ENCODE measurements at regions of chr12 and their contacts with region 1.

Region 1: GRCh38 chr12:79763766-79764452 is 73.1 kb upstream of the PAWR start:
- DNase-seq: no peak
- ATAC-seq: no peak
- H3K4me3 ChIP-seq: no peak overlapping the region
- H3K27ac ChIP-seq: no peak overlapping the region
- H3K4me1 ChIP-seq: no peaks in the 10 kb centered on the region
- H3K27me3 ChIP-seq: no peaks in the 10 kb centered on the region
- CTCF ChIP-seq: no peak

Region 2: DNA sequence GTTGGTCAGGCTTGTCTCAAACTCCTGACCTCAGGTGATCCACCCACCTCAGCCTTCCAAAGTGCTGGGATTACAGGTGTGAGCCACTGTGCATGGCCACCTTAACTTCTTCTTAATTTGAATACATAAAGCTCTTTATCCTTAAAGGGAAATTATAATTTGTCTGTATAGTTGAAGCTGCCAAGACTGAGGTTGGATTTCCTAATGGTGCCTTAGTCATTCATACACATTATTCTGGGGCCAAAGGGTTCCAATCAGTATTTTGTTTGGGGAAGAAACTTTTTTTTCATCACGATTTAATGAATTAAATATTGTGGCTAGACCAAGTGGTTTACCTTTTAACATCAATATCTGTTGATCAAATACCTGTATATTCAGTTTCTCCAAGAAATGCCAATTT is 763.4 kb before region 1 on chr12:
- CTCF ChIA-PET with region 1: no interaction called
- POLR2A ChIA-PET with region 1: interaction called, 13 read pairs
- in situ Hi-C with region 1: no loop called
- intact Hi-C with region 1: no loop called
- DNase-seq: no peak
- ATAC-seq: no peak
- H3K4me3 ChIP-seq: no peak overlapping the region
- H3K27ac ChIP-seq: no peak overlapping the region
- H3K4me1 ChIP-seq: no peaks in the 10 kb centered on the region
- H3K27me3 ChIP-seq: no peaks in the 10 kb centered on the region
- CTCF ChIP-seq: no peak

Measured in Panc1 (cell line).